ENCODE measurements at regions of chr20 and their contacts with region 1.

Region 1: GRCh38 chr20:47652775-47653174 is 132.5 kb downstream of the SULF2 start:
- DNase-seq: peak in 1 of 2 experiments; percentile 4
- H3K4me3 ChIP-seq: no peak overlapping the region
- H3K27ac ChIP-seq: no peak overlapping the region; the same call in 1 of the 2 replicates
- H3K4me1 ChIP-seq: peaks cover 0 to 27% (median 12%) of the 10 kb centered on the region in 4 experiments; a peak in 6 of 7 replicates
- H3K27me3 ChIP-seq: no peaks in the 10 kb centered on the region
- CTCF ChIP-seq: no peak
- EP300 ChIP-seq: no peak
- POLR2A ChIP-seq: no peak
- RAD21 ChIP-seq: no peak

Region 2: GRCh38 chr20:47663333-47664067 is 10.7 kb after region 1 on chr20:
- CTCF ChIA-PET with region 1: interaction called, 12 read pairs
- POLR2A ChIA-PET with region 1: interaction called, 3 read pairs
- DNase-seq: peak; percentile 75 to 99
- H3K4me3 ChIP-seq: no peak overlapping the region
- H3K27ac ChIP-seq: no peak overlapping the region
- H3K4me1 ChIP-seq: peaks cover 0 to 4% (median 1%) of the 10 kb centered on the region in 4 experiments; a peak in 4 of 7 replicates
- H3K27me3 ChIP-seq: no peaks in the 10 kb centered on the region
- CTCF ChIP-seq: peak; percentile 91 to 98 (median 95)
- EP300 ChIP-seq: no peak
- POLR2A ChIP-seq: no peak
- RAD21 ChIP-seq: peak; percentile 91 to 94

Measured in H1 (cell line).